ENCODE measurements at regions of chr6 and their contacts with region 1.

Region 1: DNA sequence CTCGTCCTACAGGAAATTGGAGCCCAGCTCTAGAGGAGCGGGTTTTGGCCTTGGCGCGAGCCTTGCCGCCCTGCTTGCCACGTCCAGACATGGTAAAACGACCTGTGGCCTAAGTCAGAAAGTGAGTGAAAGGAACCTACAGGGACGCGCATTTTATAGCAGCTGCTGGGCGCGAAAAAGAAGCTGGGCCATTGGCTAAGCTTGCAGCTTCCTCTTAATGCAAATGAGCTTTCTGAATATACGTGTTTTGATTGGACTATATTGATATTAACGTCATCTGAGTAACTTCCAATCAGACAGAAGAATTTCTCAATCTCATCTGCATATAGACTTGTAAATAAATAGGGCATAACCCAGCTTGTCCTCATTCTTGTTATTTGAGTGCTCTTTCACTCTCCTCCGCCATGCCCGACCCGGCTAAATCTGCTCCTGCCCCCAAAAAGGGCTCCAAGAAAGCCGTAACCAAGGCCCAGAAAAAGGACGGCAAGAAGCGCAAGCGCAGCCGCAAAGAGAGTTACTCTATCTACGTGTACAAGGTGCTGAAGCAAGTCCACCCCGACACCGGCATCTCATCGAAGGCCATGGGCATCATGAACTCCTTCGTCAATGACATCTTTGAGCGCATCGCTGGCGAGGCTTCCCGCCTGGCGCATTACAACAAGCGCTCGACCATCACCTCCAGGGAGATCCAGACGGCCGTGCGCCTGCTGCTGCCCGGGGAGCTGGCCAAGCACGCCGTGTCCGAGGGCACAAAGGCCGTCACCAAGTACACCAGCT is 18.9 kb downstream of the OR2B2 start:
- DNase-seq: peak; percentile 71 to 93 (median 86)
- ATAC-seq: peak; percentile 72 to 79 (median 76)
- H3K4me3 ChIP-seq: peak overlapping the region; percentile 71 to 76
- H3K4me3 Mint-ChIP-seq: no peak overlapping the region
- H3K27ac ChIP-seq: peak overlapping the region; percentile 89
- H3K27ac Mint-ChIP-seq: no peak overlapping the region
- H3K4me1 ChIP-seq: peaks cover 19 to 40% of the 10 kb centered on the region in 2 experiments
- H3K4me1 Mint-ChIP-seq: peaks cover 28 to 36% (median 29%) of the 10 kb centered on the region in 3 donors
- H3K27me3 ChIP-seq: no peaks in the 10 kb centered on the region
- H3K27me3 Mint-ChIP-seq: no peaks in the 10 kb centered on the region

Region 2: DNA sequence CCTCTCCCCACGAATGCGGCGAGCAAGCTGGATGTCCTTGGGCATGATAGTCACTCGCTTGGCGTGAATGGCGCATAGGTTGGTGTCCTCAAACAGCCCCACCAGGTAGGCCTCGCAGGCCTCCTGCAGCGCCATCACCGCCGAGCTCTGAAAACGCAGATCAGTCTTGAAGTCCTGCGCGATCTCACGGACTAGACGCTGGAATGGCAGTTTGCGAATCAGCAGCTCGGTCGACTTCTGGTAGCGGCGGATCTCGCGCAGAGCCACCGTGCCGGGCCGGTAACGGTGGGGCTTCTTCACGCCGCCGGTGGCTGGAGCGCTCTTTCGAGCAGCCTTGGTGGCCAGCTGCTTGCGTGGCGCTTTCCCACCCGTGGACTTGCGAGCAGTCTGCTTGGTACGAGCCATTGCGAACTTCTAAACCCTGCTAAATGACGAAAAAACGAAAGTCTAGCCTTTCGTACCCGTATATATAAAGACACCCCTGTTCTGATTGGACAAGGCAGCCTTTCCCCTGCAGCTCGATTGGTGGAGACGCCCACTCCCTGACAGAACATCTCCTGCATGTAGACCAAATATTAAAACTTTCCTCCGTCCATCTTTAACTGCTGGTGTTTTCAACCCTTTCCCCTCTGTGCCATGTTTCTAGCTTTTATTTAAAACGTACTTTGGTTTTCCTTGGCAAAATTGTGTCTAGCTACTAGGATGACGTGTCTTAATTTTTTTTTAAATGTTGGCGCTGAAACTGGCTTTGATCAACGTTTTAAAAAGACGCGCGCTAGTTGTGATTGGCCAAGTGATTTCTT is 1696.2 kb before region 1 on chr6:
- CTCF ChIA-PET with region 1: interaction called in 1 of 2 experiments, 3 read pairs
- POLR2A ChIA-PET with region 1: interaction called in 1 of 2 experiments, 18 read pairs
- DNase-seq: peak; percentile 55 to 93 (median 81)
- ATAC-seq: peak; percentile 58 to 66 (median 61)
- H3K4me3 ChIP-seq: peak overlapping the region; percentile 79 to 99
- H3K4me3 Mint-ChIP-seq: peak overlapping the region; percentile 95 to 98 (median 97)
- H3K27ac ChIP-seq: peak overlapping the region; percentile 85
- H3K27ac Mint-ChIP-seq: peak overlapping the region; percentile 93 to 98
- H3K4me1 ChIP-seq: peaks cover 13 to 30% of the 10 kb centered on the region in 2 experiments
- H3K4me1 Mint-ChIP-seq: peaks cover 38 to 60% (median 46%) of the 10 kb centered on the region in 3 donors
- H3K27me3 ChIP-seq: no peaks in the 10 kb centered on the region
- H3K27me3 Mint-ChIP-seq: no peaks in the 10 kb centered on the region

Region 3: GRCh38 chr6:27126815-27127537 is 766.3 kb before region 1 on chr6:
- CTCF ChIA-PET with region 1: interaction called, 4 to 11 read pairs
- POLR2A ChIA-PET with region 1: interaction called, 7 to 46 read pairs
- DNase-seq: peak; percentile 54 to 94 (median 74)
- ATAC-seq: peak; percentile 70 to 87 (median 84)
- H3K4me3 ChIP-seq: peak overlapping the region; percentile 11 to 27
- H3K4me3 Mint-ChIP-seq: peak overlapping the region; percentile 68 to 76 (median 69)
- H3K27ac ChIP-seq: peak overlapping the region; percentile 57
- H3K27ac Mint-ChIP-seq: peak overlapping the region; percentile 82 to 86
- H3K4me1 ChIP-seq: peaks cover 10 to 17% of the 10 kb centered on the region in 2 experiments
- H3K4me1 Mint-ChIP-seq: peaks cover 10 to 20% (median 16%) of the 10 kb centered on the region in 3 donors
- H3K27me3 ChIP-seq: no peaks in the 10 kb centered on the region
- H3K27me3 Mint-ChIP-seq: no peaks in the 10 kb centered on the region

Region 4: DNA sequence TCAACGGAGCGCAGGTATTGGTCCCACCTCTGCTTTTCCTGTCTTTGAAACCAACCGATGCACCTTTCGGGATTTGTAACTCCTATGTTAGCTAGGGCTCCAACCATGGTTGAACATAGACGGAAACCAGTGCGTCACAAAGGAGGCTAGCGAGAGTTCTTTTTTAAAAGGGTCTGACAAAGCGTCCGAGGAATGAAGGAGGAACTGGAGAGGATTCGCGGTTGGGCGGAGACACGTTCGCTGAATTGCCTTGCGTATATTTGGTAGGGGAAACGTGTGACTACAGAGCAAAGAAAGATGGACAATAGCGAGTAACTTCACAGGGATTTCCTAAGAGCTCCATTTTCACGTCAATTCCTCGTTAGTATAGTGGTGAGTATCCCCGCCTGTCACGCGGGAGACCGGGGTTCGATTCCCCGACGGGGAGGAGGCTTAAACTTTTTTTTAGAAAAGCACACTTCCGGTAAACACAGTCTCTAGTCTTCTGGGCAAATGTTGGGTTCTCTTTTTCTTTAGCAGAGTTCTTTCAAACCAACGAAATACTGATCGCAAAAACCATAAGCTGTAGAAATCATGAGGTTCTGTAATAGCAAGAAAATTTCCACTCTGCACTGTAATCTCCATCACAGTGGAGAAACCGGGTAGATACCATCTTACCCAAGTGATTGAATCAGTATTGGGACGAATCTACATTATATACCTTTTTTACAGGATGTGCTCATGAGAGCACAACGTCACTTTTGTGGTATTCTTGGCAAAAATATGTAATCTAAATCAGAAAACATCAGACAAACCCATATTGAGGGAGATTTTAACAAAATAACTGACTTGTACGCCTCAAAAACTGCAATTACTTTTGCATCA is 413.7 kb before region 1 on chr6:
- CTCF ChIA-PET with region 1: interaction called in 1 of 2 experiments, 4 read pairs
- POLR2A ChIA-PET with region 1: interaction called in 1 of 2 experiments, 12 read pairs
- DNase-seq: peak; percentile 72 to 94 (median 87)
- ATAC-seq: peak; percentile 72 to 84 (median 78)
- H3K4me3 ChIP-seq: peak overlapping the region; percentile 63 to 97
- H3K4me3 Mint-ChIP-seq: no peak overlapping the region
- H3K27ac ChIP-seq: peak overlapping the region; percentile 92
- H3K27ac Mint-ChIP-seq: no peak overlapping the region
- H3K4me1 ChIP-seq: peaks cover 11 to 15% of the 10 kb centered on the region in 2 experiments
- H3K4me1 Mint-ChIP-seq: peaks cover 0 to 11% (median 4%) of the 10 kb centered on the region in 3 donors
- H3K27me3 ChIP-seq: no peaks in the 10 kb centered on the region
- H3K27me3 Mint-ChIP-seq: no peaks in the 10 kb centered on the region

Region 5: DNA sequence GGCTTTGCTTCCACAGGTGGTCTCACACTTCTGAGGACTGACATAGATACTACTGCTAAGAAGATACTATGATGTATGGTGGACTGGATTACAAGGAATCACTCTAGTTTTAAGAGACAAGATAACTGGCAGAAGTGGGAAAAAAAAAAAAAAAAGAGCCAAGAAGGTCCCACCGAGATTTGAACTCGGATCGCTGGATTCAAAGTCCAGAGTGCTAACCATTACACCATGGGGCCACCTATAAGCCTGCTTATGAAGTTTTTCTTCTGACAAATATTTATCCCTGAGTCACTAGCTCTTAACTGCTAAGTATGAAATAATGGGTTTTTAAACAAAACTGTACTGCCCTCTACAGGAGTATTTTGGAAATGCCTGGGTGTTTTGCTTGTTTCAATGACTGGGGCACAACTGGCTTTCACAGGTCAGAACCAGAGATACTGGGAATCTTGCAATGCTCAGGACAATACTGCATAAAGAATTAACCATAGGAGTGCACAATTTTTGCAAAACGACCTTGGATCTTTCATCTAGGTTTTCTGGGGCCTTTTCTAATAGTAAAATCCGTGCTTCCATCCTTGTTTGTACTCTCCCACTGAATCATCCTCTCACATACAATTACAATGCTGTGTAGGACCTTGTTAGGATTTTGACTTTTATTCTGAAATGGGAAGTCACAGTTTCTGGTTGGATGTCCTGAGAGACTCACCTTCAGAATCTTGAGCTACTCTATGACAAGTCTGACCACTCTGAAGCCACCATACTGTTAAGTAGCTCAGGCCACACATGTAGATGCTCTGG is 97.4 kb before region 1 on chr6:
- CTCF ChIA-PET with region 1: interaction called, 17 to 81 read pairs
- POLR2A ChIA-PET with region 1: interaction called, 5 to 12 read pairs
- DNase-seq: peak in 19 of 35 experiments; percentile 5 to 88 (median 41)
- ATAC-seq: peak; percentile 48 to 66 (median 57)
- H3K4me3 ChIP-seq: no peak overlapping the region
- H3K4me3 Mint-ChIP-seq: no peak overlapping the region
- H3K27ac ChIP-seq: no peak overlapping the region
- H3K27ac Mint-ChIP-seq: peak overlapping the region; percentile 17 to 22
- H3K4me1 ChIP-seq: peaks cover 11 to 20% of the 10 kb centered on the region in 2 experiments
- H3K4me1 Mint-ChIP-seq: peaks cover 23 to 26% (median 23%) of the 10 kb centered on the region in 3 donors
- H3K27me3 ChIP-seq: peaks cover 0 to 9% of the 10 kb centered on the region in 2 experiments
- H3K27me3 Mint-ChIP-seq: peaks cover 5 to 9% of the 10 kb centered on the region in 2 donors

Region 6: DNA sequence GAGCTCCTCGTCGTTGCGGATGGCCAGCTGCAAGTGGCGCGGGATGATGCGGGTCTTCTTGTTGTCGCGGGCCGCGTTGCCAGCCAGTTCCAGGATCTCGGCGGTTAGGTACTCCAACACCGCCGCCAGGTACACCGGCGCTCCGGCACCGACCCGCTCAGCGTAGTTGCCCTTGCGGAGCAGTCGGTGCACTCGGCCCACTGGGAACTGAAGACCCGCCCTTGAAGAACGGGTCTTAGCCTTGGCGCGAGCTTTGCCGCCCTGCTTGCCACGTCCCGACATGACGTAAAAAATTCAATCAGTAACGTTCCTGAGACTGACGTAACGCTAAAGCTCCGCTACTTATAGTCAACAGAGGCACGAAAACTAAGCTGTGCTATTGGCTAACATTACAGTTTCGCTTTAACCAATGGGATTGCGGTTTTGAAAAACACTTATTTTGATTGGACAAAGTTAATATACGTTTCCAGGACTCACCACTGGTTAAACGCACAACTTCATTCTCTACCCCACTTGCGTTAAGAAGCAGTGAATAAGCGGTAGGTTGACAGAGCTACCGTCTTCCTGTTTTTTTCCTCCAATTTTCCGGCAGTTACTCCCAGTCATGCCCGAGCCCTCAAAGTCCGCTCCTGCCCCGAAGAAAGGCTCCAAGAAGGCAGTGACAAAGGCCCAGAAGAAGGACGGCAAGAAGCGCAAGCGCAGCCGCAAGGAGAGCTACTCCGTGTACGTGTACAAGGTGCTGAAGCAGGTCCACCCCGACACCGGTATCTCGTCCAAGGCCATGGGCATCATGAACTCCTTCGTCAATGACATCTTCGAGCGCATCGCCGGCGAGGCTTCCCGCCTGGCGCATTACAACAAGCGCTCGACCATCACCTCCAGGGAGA is 54.9 kb before region 1 on chr6:
- CTCF ChIA-PET with region 1: interaction called, 5 to 75 read pairs
- POLR2A ChIA-PET with region 1: interaction called, 54 to 161 read pairs
- DNase-seq: peak; percentile 62 to 97 (median 79)
- ATAC-seq: peak; percentile 80 to 83 (median 82)
- H3K4me3 ChIP-seq: peak overlapping the region; percentile 86 to 87
- H3K4me3 Mint-ChIP-seq: no peak overlapping the region
- H3K27ac ChIP-seq: peak overlapping the region; percentile 99
- H3K27ac Mint-ChIP-seq: no peak overlapping the region
- H3K4me1 ChIP-seq: peaks cover 14 to 28% of the 10 kb centered on the region in 2 experiments
- H3K4me1 Mint-ChIP-seq: peaks cover 9 to 20% (median 9%) of the 10 kb centered on the region in 3 donors
- H3K27me3 ChIP-seq: peaks cover 0 to 8% of the 10 kb centered on the region in 2 experiments
- H3K27me3 Mint-ChIP-seq: peaks cover 4 to 7% of the 10 kb centered on the region in 2 donors

Region 7: DNA sequence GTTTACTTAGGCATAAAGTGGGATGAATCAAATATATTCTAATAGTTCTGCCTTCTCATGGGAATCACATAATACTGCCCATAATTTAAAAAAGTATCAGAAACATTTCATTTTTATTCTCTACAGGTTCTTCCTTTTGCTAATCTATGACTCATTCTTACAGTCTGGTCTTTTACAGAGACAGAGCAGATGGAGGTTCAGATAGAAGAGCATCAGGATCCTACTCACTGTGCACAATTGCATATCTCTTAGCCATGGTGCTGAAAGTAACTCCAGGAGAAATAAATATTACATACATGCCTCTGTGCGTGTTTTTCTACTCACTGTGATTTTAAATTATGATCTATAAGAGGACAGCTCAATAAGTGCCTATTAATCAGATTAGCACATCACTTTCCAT is 47.5 kb after region 1 on chr6:
- CTCF ChIA-PET with region 1: no interaction called
- POLR2A ChIA-PET with region 1: no interaction called
- DNase-seq: no peak
- ATAC-seq: no peak
- H3K4me3 ChIP-seq: no peak overlapping the region
- H3K4me3 Mint-ChIP-seq: no peak overlapping the region
- H3K27ac ChIP-seq: no peak overlapping the region
- H3K27ac Mint-ChIP-seq: no peak overlapping the region
- H3K4me1 ChIP-seq: no peaks in the 10 kb centered on the region
- H3K4me1 Mint-ChIP-seq: no peaks in the 10 kb centered on the region
- H3K27me3 ChIP-seq: peaks cover 0 to 23% of the 10 kb centered on the region in 2 experiments
- H3K27me3 Mint-ChIP-seq: peaks cover 49 to 57% of the 10 kb centered on the region in 2 donors

Region 8: DNA sequence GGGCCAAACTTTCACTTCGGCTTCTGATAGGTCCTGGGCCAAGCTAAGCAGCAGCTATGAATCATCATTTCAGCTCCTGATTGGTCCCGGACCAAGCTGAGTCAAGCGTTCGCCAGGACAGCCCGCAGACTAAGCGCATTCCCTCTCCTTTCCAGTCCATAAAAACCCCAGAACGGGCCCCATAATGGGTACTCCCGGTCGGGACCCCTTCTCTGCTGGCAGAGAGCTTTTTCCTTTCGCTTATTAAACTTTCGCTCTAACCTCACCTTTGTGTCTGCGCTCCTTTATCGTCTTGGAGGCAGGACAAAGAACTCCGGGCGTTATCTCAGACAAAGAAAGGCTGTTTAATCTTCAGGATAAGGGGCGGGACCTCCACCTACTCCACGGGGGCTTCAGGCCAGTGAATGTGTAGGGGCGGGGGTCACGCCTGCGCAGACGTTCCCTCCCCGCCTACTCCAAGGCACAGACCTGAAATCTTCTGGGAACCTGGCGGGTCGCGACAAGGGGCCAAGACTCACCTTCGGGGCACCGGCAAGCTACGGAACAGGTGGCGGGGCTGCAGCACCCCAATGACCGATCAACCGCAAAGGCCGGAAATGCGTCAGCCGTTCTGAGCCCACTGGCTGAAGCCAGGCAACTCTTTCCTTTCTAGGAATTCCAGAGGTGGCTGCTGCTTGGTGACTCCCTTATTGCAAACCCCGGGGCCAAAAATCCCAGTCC is 442.5 kb after region 1 on chr6 and contains the start of gene ZSCAN31:
- CTCF ChIA-PET with region 1: interaction called in 1 of 2 experiments, 3 read pairs
- POLR2A ChIA-PET with region 1: interaction called in 1 of 2 experiments, 10 read pairs
- DNase-seq: peak; percentile 55 to 90 (median 78)
- ATAC-seq: peak; percentile 89 to 93 (median 91)
- H3K4me3 ChIP-seq: peak within 1 kb of the TSS; percentile 75 to 93
- H3K4me3 Mint-ChIP-seq: peak within 1 kb of the TSS in 1 of 3 donors; percentile 9
- H3K27ac ChIP-seq: peak within 1 kb of the TSS; percentile 97
- H3K27ac Mint-ChIP-seq: no peak within 1 kb of the TSS
- H3K4me1 ChIP-seq: peaks cover 6 to 13% of the 10 kb centered on the region in 2 experiments
- H3K4me1 Mint-ChIP-seq: peaks cover 3 to 7% (median 6%) of the 10 kb centered on the region in 3 donors
- H3K27me3 ChIP-seq: no peaks in the 10 kb centered on the region
- H3K27me3 Mint-ChIP-seq: no peaks in the 10 kb centered on the region
- total RNA-seq, gene ZSCAN31: 0.79 to 1.5 (median 1.1) TPM